ENCODE measurements at regions of chr13 and their contacts with region 1.

Region 1: GRCh38 chr13:27953676-27954405 is 15.3 kb downstream of the CDX2 start:
- DNase-seq: peak; percentile 75
- H3K4me3 Mint-ChIP-seq: peak overlapping the region; percentile 58
- H3K27ac Mint-ChIP-seq: no peak overlapping the region
- H3K4me1 Mint-ChIP-seq: peaks cover 10% of the 10 kb centered on the region
- H3K27me3 Mint-ChIP-seq: peaks cover 57% of the 10 kb centered on the region

Region 2: DNA sequence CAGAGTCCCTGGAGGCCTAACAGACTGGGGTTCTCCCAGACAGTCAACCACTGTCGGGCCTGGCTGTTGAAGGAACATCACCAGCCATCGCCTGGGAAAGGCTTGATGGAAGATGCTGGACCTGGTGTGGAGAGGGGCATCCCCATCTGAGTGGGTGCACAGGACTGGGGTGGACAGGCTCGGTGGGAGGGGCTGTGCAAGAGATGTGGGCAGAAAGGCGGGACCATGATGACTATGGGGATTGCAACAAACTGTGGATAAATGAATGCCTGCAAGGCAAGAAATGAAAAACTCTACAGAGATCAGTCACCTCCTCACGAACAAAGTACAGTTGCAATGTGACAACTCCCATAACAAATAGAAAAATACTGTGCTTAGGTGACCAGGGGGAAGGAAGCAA is 1021.4 kb before region 1 on chr13:
- CTCF ChIA-PET with region 1: no interaction called
- POLR2A ChIA-PET with region 1: no interaction called
- intact Hi-C with region 1: no loop called
- DNase-seq: no peak
- H3K4me3 Mint-ChIP-seq: no peak overlapping the region
- H3K27ac Mint-ChIP-seq: no peak overlapping the region
- H3K4me1 Mint-ChIP-seq: peaks cover 7% of the 10 kb centered on the region
- H3K27me3 Mint-ChIP-seq: peaks cover under 1% of the 10 kb centered on the region

Region 3: GRCh38 chr13:27182844-27183497 is 770.9 kb before region 1 on chr13:
- CTCF ChIA-PET with region 1: no interaction called
- POLR2A ChIA-PET with region 1: no interaction called
- intact Hi-C with region 1: no loop called
- DNase-seq: no peak
- H3K4me3 Mint-ChIP-seq: no peak overlapping the region
- H3K27ac Mint-ChIP-seq: no peak overlapping the region
- H3K4me1 Mint-ChIP-seq: no peaks in the 10 kb centered on the region
- H3K27me3 Mint-ChIP-seq: peaks cover 3% of the 10 kb centered on the region

Region 4: DNA sequence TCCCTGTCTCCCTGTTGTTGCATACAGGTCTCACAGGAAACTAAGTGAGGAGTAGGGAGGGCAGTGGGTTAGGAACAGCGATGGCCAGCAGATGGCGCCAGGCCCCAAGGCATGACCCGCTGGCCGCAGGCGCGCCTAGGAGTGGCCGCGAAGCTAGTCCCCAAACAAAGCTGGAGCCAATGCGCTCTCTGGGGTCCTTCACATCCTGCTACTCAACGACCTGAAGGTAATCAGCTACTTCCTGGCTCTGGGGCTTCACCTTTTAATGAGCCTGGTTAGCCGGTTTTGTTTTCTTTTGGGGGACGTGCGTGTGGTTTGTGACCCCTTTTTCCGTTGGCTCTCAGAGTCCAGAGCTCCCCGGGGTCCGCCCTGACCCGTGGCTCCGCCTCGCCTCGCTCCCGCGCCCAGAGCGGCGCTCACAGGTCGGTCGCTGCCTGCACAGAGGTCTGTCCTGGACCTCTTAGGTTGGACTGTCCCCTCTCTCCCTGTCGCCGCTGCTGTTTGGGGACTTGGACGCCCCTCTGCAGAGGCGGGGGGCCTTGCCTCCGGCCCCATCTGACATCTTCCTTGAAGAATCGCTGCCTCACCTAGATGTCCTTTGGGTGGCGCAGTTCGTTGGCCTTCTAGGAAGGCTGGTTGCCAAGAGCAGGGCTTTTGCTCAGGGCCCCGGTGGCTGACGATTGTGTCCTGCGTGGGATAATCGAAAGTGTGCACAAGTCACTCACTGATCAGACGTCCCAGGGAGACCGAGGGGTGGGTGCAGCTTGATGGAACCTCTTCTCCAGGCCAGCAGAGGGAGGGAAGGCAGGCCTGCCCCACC is 591.6 kb before region 1 on chr13:
- CTCF ChIA-PET with region 1: interaction called, 16 read pairs
- POLR2A ChIA-PET with region 1: no interaction called
- intact Hi-C with region 1: no loop called
- DNase-seq: peak; percentile 85
- H3K4me3 Mint-ChIP-seq: no peak overlapping the region
- H3K27ac Mint-ChIP-seq: no peak overlapping the region
- H3K4me1 Mint-ChIP-seq: no peaks in the 10 kb centered on the region
- H3K27me3 Mint-ChIP-seq: peaks cover 22% of the 10 kb centered on the region

Region 5: GRCh38 chr13:27374650-27375049 is 579.2 kb before region 1 on chr13:
- CTCF ChIA-PET with region 1: interaction called, 6 read pairs
- POLR2A ChIA-PET with region 1: no interaction called
- intact Hi-C with region 1: loop called (anchors 10 kb)
- DNase-seq: peak; percentile 70
- H3K4me3 Mint-ChIP-seq: no peak overlapping the region
- H3K27ac Mint-ChIP-seq: no peak overlapping the region
- H3K4me1 Mint-ChIP-seq: peaks cover 5% of the 10 kb centered on the region
- H3K27me3 Mint-ChIP-seq: peaks cover 20% of the 10 kb centered on the region

Region 6: DNA sequence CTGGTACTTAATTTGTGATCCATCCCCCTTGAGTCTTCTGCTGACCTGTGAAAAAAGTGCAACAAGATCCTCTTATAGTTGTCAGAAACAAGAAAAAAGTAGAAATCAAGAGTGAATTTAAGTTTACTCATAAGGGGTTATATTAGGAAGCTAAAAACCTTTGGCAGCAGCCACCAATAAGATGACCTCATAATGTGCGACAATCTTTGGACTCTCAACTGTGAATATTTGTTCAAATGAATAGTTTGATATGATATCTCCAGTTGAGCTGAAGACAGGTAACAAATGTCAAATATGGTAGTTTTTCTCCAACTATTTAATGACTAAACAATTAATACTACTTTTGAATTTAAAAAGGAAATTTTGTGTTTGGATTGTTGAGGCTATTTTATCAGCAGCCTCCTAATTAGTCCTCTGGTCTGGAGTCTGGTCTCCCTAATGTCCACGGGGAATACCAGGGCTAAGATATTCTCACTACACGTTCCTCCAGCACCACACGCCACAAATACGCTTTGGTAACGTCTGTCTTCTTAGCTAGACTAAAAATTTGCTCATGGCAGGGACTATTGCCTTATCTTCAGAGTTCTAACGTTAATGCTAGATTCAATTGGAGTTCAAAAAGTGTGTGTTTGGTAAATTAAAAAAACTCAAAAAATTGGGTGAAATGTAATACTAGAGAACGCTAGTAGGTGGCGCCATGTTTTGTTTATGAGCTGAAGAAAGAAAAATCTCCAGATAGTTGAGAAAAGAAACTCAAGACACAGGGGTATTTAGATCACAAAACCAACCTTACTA is 85.0 kb before region 1 on chr13:
- CTCF ChIA-PET with region 1: interaction called, 28 read pairs
- POLR2A ChIA-PET with region 1: no interaction called
- intact Hi-C with region 1: loop called (anchors 2 kb)
- DNase-seq: no peak
- H3K4me3 Mint-ChIP-seq: no peak overlapping the region
- H3K27ac Mint-ChIP-seq: no peak overlapping the region
- H3K4me1 Mint-ChIP-seq: no peaks in the 10 kb centered on the region
- H3K27me3 Mint-ChIP-seq: peaks cover 21% of the 10 kb centered on the region

Region 7: DNA sequence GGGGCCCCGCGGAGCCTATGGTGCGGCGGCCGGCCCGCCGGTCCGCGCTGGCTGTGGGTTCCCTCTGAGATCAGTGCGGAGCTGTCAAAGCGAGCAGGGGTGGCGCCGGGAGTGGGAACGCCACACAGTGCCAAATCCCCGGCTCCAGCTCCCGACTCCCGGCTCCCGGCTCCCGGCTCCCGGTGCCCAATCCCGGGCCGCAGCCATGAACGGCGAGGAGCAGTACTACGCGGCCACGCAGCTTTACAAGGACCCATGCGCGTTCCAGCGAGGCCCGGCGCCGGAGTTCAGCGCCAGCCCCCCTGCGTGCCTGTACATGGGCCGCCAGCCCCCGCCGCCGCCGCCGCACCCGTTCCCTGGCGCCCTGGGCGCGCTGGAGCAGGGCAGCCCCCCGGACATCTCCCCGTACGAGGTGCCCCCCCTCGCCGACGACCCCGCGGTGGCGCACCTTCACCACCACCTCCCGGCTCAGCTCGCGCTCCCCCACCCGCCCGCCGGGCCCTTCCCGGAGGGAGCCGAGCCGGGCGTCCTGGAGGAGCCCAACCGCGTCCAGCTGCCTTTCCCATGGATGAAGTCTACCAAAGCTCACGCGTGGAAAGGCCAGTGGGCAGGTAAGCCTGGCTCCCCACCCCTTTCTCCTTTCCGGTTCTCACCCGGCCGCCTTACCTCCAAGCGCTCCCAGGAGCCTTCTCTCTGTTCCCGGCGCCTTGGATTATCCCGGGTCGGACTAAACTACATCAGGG is 33.7 kb before region 1 on chr13 and contains the start of gene PDX1:
- CTCF ChIA-PET with region 1: interaction called, 21 read pairs
- POLR2A ChIA-PET with region 1: no interaction called
- intact Hi-C with region 1: no loop called
- DNase-seq: no peak
- H3K4me3 Mint-ChIP-seq: peak within 1 kb of the TSS; percentile 66
- H3K27ac Mint-ChIP-seq: peak within 1 kb of the TSS; percentile 6
- H3K4me1 Mint-ChIP-seq: peaks cover 37% of the 10 kb centered on the region
- H3K27me3 Mint-ChIP-seq: peaks cover 71% of the 10 kb centered on the region
- total RNA-seq, gene PDX1: not detected

Region 8: GRCh38 chr13:27927444-27928352 is 26.1 kb before region 1 on chr13:
- CTCF ChIA-PET with region 1: interaction called, 8 read pairs
- POLR2A ChIA-PET with region 1: no interaction called
- intact Hi-C with region 1: loop called (anchors 2 kb)
- DNase-seq: no peak
- H3K4me3 Mint-ChIP-seq: no peak overlapping the region
- H3K27ac Mint-ChIP-seq: no peak overlapping the region
- H3K4me1 Mint-ChIP-seq: peaks cover 25% of the 10 kb centered on the region
- H3K27me3 Mint-ChIP-seq: peaks cover 79% of the 10 kb centered on the region

Measured in activated CD4-positive, alpha-beta memory T cell treated with anti-CD3 and anti-CD28 coated beads for 36 hours (primary cell).